ENCODE measurements at regions of chr4 and their contacts with region 1.

Region 1: DNA sequence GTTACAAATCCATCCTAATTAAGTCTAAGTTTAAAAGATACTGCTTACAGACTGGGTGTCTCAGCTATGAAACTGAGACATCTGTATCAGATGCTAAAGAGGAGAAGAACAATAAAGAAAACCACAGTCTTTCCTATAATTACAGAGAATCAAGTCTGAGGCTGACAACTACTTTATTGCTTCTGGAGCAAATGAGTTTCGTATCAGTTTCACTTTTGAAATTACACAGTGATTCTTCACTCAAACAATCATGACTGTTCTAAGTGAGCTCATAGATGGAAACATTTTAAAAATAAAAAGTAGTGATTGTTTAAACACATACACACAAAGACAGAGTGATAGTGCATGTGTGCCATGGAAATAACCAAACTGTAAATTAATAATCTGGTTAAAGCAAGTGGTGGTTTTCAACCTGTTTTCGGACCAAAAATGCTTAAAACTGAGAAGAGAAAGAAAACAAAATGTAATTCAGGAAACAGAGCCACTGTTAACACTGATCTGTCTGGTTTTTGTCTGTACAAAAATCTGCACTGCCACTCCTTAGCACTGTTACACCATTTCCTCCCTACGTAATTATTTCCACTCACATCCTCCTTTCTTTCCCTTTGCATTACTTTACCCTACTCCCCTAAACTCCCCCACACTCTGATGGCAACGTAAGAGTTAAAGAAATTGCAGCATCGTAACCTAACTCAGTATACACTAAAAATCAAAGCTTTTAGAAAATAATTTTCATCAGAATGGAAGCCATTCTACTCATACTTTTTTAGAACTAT is 12.5 kb downstream of the RFC1 start:
- DNase-seq: peak; percentile 47
- ATAC-seq: peak; percentile 85
- H3K4me3 Mint-ChIP-seq: peak overlapping the region; percentile 70
- H3K27ac Mint-ChIP-seq: peak overlapping the region; percentile 94
- H3K4me1 Mint-ChIP-seq: peaks cover 79% of the 10 kb centered on the region
- H3K27me3 Mint-ChIP-seq: no peaks in the 10 kb centered on the region

Region 2: GRCh38 chr4:38160487-38161207 is 1193.0 kb before region 1 on chr4:
- CTCF ChIA-PET with region 1: no interaction called
- POLR2A ChIA-PET with region 1: no interaction called
- intact Hi-C with region 1: loop called in 1 of 2 experiments (anchors 5 kb)
- DNase-seq: peak; percentile 69
- ATAC-seq: peak; percentile 79
- H3K4me3 Mint-ChIP-seq: no peak overlapping the region
- H3K27ac Mint-ChIP-seq: peak overlapping the region; percentile 73
- H3K4me1 Mint-ChIP-seq: peaks cover 70% of the 10 kb centered on the region
- H3K27me3 Mint-ChIP-seq: no peaks in the 10 kb centered on the region

Region 3: GRCh38 chr4:38958453-38959190 is 395.0 kb before region 1 on chr4:
- CTCF ChIA-PET with region 1: no interaction called
- POLR2A ChIA-PET with region 1: no interaction called
- intact Hi-C with region 1: loop called in 1 of 2 experiments (anchors 5 kb)
- DNase-seq: no peak
- ATAC-seq: peak; percentile 57
- H3K4me3 Mint-ChIP-seq: no peak overlapping the region
- H3K27ac Mint-ChIP-seq: peak overlapping the region; percentile 84
- H3K4me1 Mint-ChIP-seq: peaks cover 33% of the 10 kb centered on the region
- H3K27me3 Mint-ChIP-seq: no peaks in the 10 kb centered on the region

Region 4: DNA sequence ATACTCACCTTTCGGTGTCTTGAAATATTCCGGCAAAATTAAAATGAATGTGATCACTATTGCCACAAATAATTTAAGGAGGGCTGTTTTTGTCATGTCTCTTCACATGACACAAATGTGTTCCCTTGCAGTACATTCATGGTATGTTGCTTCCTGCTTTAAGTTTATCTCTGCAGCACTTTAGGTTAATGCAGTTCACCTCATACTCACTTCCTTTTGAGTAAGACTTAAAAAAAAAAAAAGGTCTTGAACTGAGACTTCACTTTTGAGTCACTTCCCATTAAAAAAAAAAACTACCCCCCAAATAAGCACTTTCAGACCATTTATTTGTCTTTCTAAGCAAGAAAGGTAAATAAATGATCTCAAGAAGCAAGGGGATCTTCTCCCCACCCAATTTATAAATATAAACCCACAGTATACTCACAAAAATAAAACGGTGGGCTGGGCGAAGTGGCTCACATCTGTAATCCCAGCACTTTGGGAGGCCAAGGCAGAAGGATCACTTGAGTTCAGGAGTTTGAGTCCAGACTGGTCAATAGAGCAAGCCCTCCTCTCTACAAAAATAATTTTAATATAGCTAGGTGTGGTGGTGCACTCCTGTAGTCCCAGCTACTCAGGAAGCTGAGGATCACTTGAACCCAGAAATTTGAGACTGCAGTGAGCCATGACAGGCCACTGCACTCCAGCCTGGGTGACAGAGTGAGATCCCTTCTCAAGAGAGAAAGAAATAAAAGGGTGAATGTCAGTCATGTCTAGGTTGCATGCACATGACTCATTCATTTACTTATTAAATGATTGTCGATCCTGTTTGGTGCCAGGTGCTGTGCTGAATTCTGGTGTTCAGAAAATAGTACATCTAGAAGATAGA is 321.2 kb before region 1 on chr4 and contains the start of gene TMEM156:
- CTCF ChIA-PET with region 1: no interaction called
- POLR2A ChIA-PET with region 1: no interaction called
- intact Hi-C with region 1: loop called (anchors 1 to 10 kb)
- DNase-seq: peak; percentile 68
- ATAC-seq: peak; percentile 87
- H3K4me3 Mint-ChIP-seq: peak within 1 kb of the TSS; percentile 77
- H3K27ac Mint-ChIP-seq: peak within 1 kb of the TSS; percentile 88
- H3K4me1 Mint-ChIP-seq: peaks cover 46% of the 10 kb centered on the region
- H3K27me3 Mint-ChIP-seq: no peaks in the 10 kb centered on the region
- total RNA-seq, gene TMEM156: 14.3 to 15.4 TPM

Region 5: GRCh38 chr4:39181905-39182638 is 171.6 kb before region 1 on chr4 and contains the start of gene WDR19:
- CTCF ChIA-PET with region 1: no interaction called
- POLR2A ChIA-PET with region 1: interaction called, 3 read pairs
- intact Hi-C with region 1: loop called in 1 of 2 experiments (anchors 1 kb)
- DNase-seq: peak; percentile 99
- ATAC-seq: peak; percentile 99
- H3K4me3 Mint-ChIP-seq: no peak within 1 kb of the TSS
- H3K27ac Mint-ChIP-seq: no peak within 1 kb of the TSS
- H3K4me1 Mint-ChIP-seq: peaks cover 8% of the 10 kb centered on the region
- H3K27me3 Mint-ChIP-seq: peaks cover 3% of the 10 kb centered on the region
- total RNA-seq, gene WDR19: 12.1 to 16.2 TPM

Region 6: GRCh38 chr4:39365830-39366771 is 12.4 kb after region 1 on chr4 and contains the start of gene RFC1:
- CTCF ChIA-PET with region 1: interaction called, 30 read pairs
- POLR2A ChIA-PET with region 1: interaction called, 23 read pairs
- intact Hi-C with region 1: loop called (anchors 1 kb)
- DNase-seq: peak; percentile 97
- ATAC-seq: peak; percentile 90
- H3K4me3 Mint-ChIP-seq: peak within 1 kb of the TSS; percentile 98
- H3K27ac Mint-ChIP-seq: peak within 1 kb of the TSS; percentile 97
- H3K4me1 Mint-ChIP-seq: peaks cover 32% of the 10 kb centered on the region
- H3K27me3 Mint-ChIP-seq: no peaks in the 10 kb centered on the region
- total RNA-seq, gene RFC1: 112 to 216 TPM